ENCODE measurements at regions of chr5 and their contacts with region 1.

Region 1: DNA sequence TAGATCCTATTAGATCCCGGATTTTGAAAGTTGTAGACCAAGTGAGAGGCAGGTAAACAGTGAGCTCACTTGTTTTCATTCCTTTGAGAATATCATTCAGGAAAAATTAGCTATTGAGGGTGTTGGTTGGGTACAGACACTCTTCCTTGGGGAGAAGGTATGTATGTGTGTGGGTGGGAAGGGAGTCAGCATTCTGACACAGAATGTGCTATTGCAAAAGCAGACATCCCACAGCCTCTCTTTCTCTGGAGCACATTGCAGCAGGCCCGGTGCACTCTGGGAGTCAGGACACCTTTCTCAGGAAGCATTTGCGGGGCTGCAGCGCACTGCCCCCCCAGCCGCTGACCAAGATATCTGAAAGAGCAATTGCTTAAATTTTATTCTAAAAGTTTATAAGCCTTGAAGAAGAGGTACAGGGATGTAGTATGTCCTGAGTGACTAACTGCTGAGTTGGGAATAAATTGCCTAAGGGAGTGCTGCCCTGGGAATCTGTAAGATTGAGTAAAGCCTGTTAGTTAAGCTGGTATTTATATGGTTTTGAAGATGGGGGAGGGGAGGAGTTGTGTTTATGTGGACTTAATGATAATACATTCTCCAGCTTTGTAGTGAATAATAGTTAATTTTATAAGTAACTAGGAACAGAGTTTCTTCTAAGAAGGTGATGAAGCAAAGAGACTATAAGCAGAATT is 5.2 kb downstream of the TNFAIP8 start:
- DNase-seq: no peak
- ATAC-seq: no peak
- H3K4me3 ChIP-seq: no peak overlapping the region
- H3K4me3 Mint-ChIP-seq: peak overlapping the region; percentile 12
- H3K27ac ChIP-seq: peak overlapping the region in 1 of 2 experiments; percentile 48
- H3K27ac Mint-ChIP-seq: peak overlapping the region; percentile 95
- H3K4me1 ChIP-seq: peaks cover 90% of the 10 kb centered on the region
- H3K4me1 Mint-ChIP-seq: peaks cover 91% of the 10 kb centered on the region
- H3K27me3 ChIP-seq: no peaks in the 10 kb centered on the region
- H3K27me3 Mint-ChIP-seq: no peaks in the 10 kb centered on the region
- CTCF ChIP-seq: no peak

Region 2: DNA sequence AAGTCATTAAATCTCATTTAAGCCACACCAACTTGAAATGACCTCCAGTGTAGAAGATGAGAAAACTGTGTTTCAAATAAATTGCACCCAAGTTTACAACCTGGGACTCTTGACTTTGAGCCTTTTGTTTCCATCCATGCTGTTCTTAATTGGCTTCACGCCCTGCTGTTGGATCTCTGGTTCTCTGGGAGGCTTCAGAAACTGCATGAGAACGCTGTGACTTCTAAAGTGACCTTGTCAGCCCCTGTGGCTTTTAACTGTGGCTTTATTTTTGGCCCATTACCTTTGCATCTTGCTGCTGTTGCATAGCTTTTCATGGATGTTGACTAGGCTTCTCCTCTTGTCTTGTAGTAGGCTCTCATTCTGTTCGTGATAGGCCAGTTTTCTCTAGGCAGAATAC is 24.1 kb after region 1 on chr5:
- CTCF ChIA-PET with region 1: interaction called, 4 read pairs
- POLR2A ChIA-PET with region 1: interaction called, 3 read pairs
- intact Hi-C with region 1: loop called in 1 of 2 experiments (anchors 2 kb)
- DNase-seq: no peak
- ATAC-seq: no peak
- H3K4me3 ChIP-seq: no peak overlapping the region
- H3K4me3 Mint-ChIP-seq: no peak overlapping the region
- H3K27ac ChIP-seq: peak overlapping the region in 1 of 2 experiments; percentile 9
- H3K27ac Mint-ChIP-seq: peak overlapping the region; percentile 78
- H3K4me1 ChIP-seq: peaks cover 63% of the 10 kb centered on the region
- H3K4me1 Mint-ChIP-seq: peaks cover 84% of the 10 kb centered on the region
- H3K27me3 ChIP-seq: no peaks in the 10 kb centered on the region
- H3K27me3 Mint-ChIP-seq: no peaks in the 10 kb centered on the region
- CTCF ChIP-seq: no peak

Region 3: GRCh38 chr5:119740225-119740624 is 379.2 kb after region 1 on chr5:
- CTCF ChIA-PET with region 1: no interaction called
- POLR2A ChIA-PET with region 1: no interaction called
- intact Hi-C with region 1: no loop called
- DNase-seq: no peak
- ATAC-seq: no peak
- H3K4me3 ChIP-seq: no peak overlapping the region
- H3K4me3 Mint-ChIP-seq: no peak overlapping the region
- H3K27ac ChIP-seq: no peak overlapping the region
- H3K27ac Mint-ChIP-seq: no peak overlapping the region
- H3K4me1 ChIP-seq: no peaks in the 10 kb centered on the region
- H3K4me1 Mint-ChIP-seq: no peaks in the 10 kb centered on the region
- H3K27me3 ChIP-seq: no peaks in the 10 kb centered on the region
- H3K27me3 Mint-ChIP-seq: no peaks in the 10 kb centered on the region
- CTCF ChIP-seq: no peak